ENCODE measurements at regions of chr16 and their contacts with region 1.

Region 1: DNA sequence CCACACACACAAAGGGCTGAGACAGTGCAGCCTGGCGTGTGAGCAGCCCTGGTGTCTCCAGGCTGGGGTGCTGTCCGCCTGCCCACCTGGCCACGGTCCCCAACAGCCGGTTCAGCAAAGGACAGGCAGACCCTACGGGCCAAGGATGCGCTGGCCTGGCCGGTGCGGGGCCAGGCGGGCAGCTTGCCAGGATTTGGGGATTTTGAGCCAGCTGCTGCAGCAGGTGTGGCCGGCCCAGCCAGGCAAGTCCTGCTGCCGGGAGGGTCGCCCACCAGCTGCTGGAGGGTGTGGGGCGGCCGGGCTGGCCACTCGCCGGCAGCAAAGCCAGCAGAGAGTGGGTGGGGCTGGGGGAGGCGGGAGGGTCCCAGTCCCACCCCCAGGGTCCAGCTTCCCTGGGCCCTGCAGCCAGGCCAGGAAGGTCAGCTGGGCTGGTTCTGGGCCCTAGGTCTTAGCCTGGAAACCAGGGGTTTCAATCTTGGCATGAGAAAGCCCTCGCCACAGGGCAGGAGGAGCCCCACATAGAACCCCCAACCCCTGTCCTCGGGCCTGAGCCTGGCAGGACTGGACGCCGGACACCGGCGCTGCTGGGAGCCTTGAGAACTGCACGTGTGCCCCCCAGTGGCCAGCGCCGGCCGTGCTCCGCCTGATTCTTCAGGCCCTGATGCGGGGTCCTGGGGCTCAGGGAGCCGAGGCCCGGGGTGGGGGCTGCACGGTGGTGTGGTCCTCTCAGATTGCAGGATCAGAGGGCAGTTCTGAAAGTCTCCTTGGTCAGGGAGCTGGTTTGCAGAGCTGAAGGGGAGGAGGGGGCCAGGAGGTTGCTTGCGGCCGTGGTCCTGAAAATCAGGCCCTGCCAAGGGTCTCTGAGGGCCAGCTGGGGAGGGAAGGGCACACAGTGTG is 17.6 kb upstream of the SSTR5 start:
- H3K4me3 ChIP-seq: no peak overlapping the region
- H3K27ac ChIP-seq: no peak overlapping the region
- H3K4me1 ChIP-seq: peaks cover 2% of the 10 kb centered on the region; the same call in 1 of the 2 replicates
- CTCF ChIP-seq: peak; percentile 77

Region 2: GRCh38 chr16:813204-813915 is 241.5 kb before region 1 on chr16:
- CTCF ChIA-PET with region 1: interaction called, 31 read pairs
- POLR2A ChIA-PET with region 1: no interaction called
- H3K4me3 ChIP-seq: no peak overlapping the region
- H3K27ac ChIP-seq: no peak overlapping the region
- H3K4me1 ChIP-seq: no peaks in the 10 kb centered on the region
- CTCF ChIP-seq: peak; percentile 47; the same call in 1 of the 2 replicates

Region 3: GRCh38 chr16:1069154-1069553 is 14.2 kb after region 1 on chr16:
- CTCF ChIA-PET with region 1: interaction called, 28 read pairs
- POLR2A ChIA-PET with region 1: no interaction called
- H3K4me3 ChIP-seq: no peak overlapping the region
- H3K27ac ChIP-seq: no peak overlapping the region
- H3K4me1 ChIP-seq: no peaks in the 10 kb centered on the region; the same call in 1 of the 2 replicates
- CTCF ChIP-seq: no peak

Region 4: GRCh38 chr16:1089822-1090619 is 35.1 kb after region 1 on chr16:
- CTCF ChIA-PET with region 1: interaction called, 11 read pairs
- POLR2A ChIA-PET with region 1: no interaction called
- H3K4me3 ChIP-seq: no peak overlapping the region
- H3K27ac ChIP-seq: no peak overlapping the region
- H3K4me1 ChIP-seq: peaks cover 4% of the 10 kb centered on the region; the same call in 1 of the 2 replicates
- CTCF ChIP-seq: no peak